CD4-positive, alpha-beta memory T cell (primary cell): ENCODE measurements at regions of chr1 and their contacts with region 1.

Region 1: GRCh38 chr1:29235955-29236684 is at the start of gene PTPRU:
- DNase-seq: peak; percentile 60 to 85 (median 77)
- H3K4me3 ChIP-seq: peak within 1 kb of the TSS; percentile 28 to 60
- H3K4me3 Mint-ChIP-seq: peak within 1 kb of the TSS; percentile 82 to 92 (median 87)
- H3K27ac ChIP-seq: no peak within 1 kb of the TSS
- H3K27ac Mint-ChIP-seq: peak within 1 kb of the TSS in 6 of 7 donors; percentile 33 to 86 (median 56)
- H3K4me1 ChIP-seq: peaks cover 17% of the 10 kb centered on the region
- H3K4me1 Mint-ChIP-seq: peaks cover 18 to 37% (median 20%) of the 10 kb centered on the region in 4 donors
- H3K27me3 ChIP-seq: peaks cover 19% of the 10 kb centered on the region
- H3K27me3 Mint-ChIP-seq: peaks cover 36 to 40% of the 10 kb centered on the region in 2 donors
- total RNA-seq, gene PTPRU: 0.38 TPM in 1 of 2 experiments, not detected in the other

Region 2: GRCh38 chr1:28160782-28161266 is 1075.3 kb before region 1 on chr1:
- CTCF ChIA-PET with region 1: no interaction called
- POLR2A ChIA-PET with region 1: no interaction called
- intact Hi-C with region 1: no loop called
- DNase-seq: no peak
- H3K4me3 ChIP-seq: no peak overlapping the region
- H3K4me3 Mint-ChIP-seq: no peak overlapping the region
- H3K27ac ChIP-seq: no peak overlapping the region
- H3K27ac Mint-ChIP-seq: no peak overlapping the region
- H3K4me1 ChIP-seq: no peaks in the 10 kb centered on the region
- H3K4me1 Mint-ChIP-seq: peaks cover 0 to 3% (median 0%) of the 10 kb centered on the region in 4 donors
- H3K27me3 ChIP-seq: no peaks in the 10 kb centered on the region
- H3K27me3 Mint-ChIP-seq: peaks cover 2 to 3% of the 10 kb centered on the region in 2 donors

Region 3: GRCh38 chr1:28792644-28793121 is 443.4 kb before region 1 on chr1:
- CTCF ChIA-PET with region 1: no interaction called
- POLR2A ChIA-PET with region 1: no interaction called
- intact Hi-C with region 1: no loop called
- DNase-seq: no peak
- H3K4me3 ChIP-seq: no peak overlapping the region
- H3K4me3 Mint-ChIP-seq: no peak overlapping the region
- H3K27ac ChIP-seq: no peak overlapping the region
- H3K27ac Mint-ChIP-seq: no peak overlapping the region
- H3K4me1 ChIP-seq: no peaks in the 10 kb centered on the region
- H3K4me1 Mint-ChIP-seq: peaks cover 0 to 2% (median 0%) of the 10 kb centered on the region in 4 donors
- H3K27me3 ChIP-seq: no peaks in the 10 kb centered on the region
- H3K27me3 Mint-ChIP-seq: peaks cover 4 to 8% of the 10 kb centered on the region in 2 donors

Region 4: DNA sequence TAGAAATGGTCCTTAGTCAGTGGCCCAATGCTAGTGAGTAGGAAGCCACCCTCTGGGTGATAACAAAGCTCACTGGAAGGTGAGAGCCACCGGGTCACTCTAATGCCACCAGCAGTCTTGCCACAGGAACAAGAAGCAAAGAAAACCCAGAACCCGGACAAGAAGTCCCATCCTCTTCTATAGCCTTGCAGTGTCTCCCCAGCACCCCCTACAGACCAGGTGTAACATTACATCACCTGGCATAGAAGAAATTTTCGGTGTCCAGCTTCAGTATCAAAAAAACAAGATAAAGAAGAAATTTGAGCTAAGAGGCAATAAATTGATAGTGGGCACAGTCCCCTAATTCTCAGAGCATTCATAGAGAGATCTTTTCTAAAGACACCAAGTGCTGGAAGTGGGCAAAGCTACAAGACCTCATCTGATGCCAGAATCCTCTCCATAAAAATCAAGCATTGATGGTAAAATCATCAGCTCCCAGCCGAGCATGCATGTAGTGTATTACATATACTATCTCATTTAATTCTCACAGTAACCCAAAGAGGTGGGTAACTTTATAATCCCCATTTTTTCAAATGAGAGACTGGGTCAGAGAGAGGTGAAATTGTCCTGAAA is 996.3 kb after region 1 on chr1:
- CTCF ChIA-PET with region 1: no interaction called
- POLR2A ChIA-PET with region 1: no interaction called
- intact Hi-C with region 1: loop called (anchors 5 kb)
- DNase-seq: peak in 4 of 5 donors; percentile 13 to 20 (median 16)
- H3K4me3 ChIP-seq: no peak overlapping the region
- H3K4me3 Mint-ChIP-seq: no peak overlapping the region
- H3K27ac ChIP-seq: no peak overlapping the region
- H3K27ac Mint-ChIP-seq: no peak overlapping the region
- H3K4me1 ChIP-seq: no peaks in the 10 kb centered on the region
- H3K4me1 Mint-ChIP-seq: no peaks in the 10 kb centered on the region
- H3K27me3 ChIP-seq: no peaks in the 10 kb centered on the region
- H3K27me3 Mint-ChIP-seq: peaks cover 3 to 13% of the 10 kb centered on the region in 2 donors

Region 5: GRCh38 chr1:30707412-30708360 is 1471.6 kb after region 1 on chr1:
- CTCF ChIA-PET with region 1: no interaction called
- POLR2A ChIA-PET with region 1: no interaction called
- intact Hi-C with region 1: loop called (anchors 1 kb)
- DNase-seq: peak in 4 of 5 donors; percentile 33 to 52 (median 46)
- H3K4me3 ChIP-seq: no peak overlapping the region
- H3K4me3 Mint-ChIP-seq: no peak overlapping the region
- H3K27ac ChIP-seq: no peak overlapping the region
- H3K27ac Mint-ChIP-seq: no peak overlapping the region
- H3K4me1 ChIP-seq: no peaks in the 10 kb centered on the region
- H3K4me1 Mint-ChIP-seq: peaks cover 0 to 1% (median under 1%) of the 10 kb centered on the region in 4 donors
- H3K27me3 ChIP-seq: no peaks in the 10 kb centered on the region
- H3K27me3 Mint-ChIP-seq: peaks cover 8 to 12% of the 10 kb centered on the region in 2 donors